A549 (cell line): ENCODE measurements at regions of chr12 and their contacts with region 1.

Region 1: DNA sequence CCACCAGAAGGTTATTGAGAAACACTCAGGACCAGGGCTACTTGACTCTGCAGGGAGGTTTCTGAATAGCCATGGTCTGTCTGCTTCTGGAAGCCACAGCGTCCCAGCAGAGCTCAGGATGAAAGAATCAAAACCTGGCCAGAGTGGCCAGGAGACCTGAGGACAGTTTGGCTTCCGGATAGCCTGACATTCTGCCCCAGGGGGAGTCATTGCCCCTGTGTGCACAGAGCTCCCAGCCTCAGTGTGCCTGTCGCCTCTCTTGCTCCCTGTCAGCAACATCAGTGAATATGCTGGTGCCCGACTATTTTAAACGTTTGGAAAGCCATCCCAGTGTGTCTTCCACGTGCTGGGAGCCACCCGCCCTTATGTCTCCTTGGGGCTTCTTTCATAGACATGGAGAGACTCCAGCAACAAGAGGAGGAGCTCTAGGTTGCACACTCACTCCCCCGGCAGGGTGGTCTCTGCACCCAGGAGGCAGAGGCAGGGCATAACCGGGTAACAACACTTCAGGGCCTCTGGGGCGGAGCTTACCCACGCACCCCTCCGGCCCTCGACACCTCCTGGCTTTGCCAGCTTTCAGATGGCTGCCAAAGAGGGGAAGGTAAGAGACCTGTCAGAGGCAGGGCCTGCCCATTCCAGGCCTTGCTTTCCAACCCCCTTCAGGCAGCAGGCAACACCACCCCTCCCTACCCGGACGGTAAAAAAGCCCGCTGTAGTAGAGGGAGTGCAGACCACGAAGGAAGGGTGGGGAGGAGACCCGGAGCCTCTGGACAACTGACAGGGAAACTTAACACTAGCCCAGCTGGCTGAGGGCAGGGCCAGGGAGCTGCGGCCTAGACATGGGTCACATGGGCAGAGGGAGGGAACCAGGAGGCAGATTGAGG is 19.0 kb upstream of the SLC6A12 start:
- DNase-seq: no peak
- ATAC-seq: no peak
- H3K4me3 ChIP-seq: no peak overlapping the region
- H3K27ac ChIP-seq: no peak overlapping the region
- H3K4me1 ChIP-seq: 0 out of 3 replicates have a peak, but pooled peaks cover 4% of the 10 kb centered on the region
- CTCF ChIP-seq: no peak
- EP300 ChIP-seq: no peak
- POLR2A ChIP-seq: no peak
- RAD21 ChIP-seq: no peak

Region 2: GRCh38 chr12:169528-170370 is 63.2 kb before region 1 on chr12:
- CTCF ChIA-PET with region 1: no interaction called
- POLR2A ChIA-PET with region 1: no interaction called
- DNase-seq: no peak
- ATAC-seq: peak; percentile 57 to 74; a peak in 5 of 6 replicates
- H3K4me3 ChIP-seq: no peak overlapping the region
- H3K27ac ChIP-seq: no peak overlapping the region
- H3K4me1 ChIP-seq: no peaks in the 10 kb centered on the region
- CTCF ChIP-seq: no peak
- EP300 ChIP-seq: no peak
- POLR2A ChIP-seq: no peak
- RAD21 ChIP-seq: no peak

Region 3: DNA sequence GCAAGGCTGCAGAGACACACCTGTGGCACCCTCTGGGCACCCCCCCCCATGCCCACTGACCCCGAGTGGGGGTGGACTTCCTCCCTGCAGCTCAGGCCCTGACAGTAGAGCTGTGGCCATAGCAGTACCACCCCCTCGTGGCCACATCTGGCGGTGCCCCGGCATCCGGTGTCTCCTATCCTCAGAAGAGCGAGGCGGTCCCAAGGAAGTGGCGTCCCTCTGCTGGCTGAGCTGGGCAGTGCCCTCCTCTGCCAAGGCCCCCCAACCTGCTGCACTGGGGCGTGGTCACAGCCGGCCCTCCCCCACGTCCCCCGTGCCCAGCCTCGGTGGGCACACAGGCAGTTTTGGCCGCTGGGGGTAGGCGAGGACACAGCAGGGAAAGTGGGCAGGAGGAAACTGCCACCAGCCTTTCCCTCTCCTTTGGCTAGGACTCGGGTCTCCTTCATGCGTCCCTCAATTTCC is 13.1 kb before region 1 on chr12:
- CTCF ChIA-PET with region 1: interaction called, 19 read pairs
- POLR2A ChIA-PET with region 1: no interaction called
- DNase-seq: peak; percentile 84 to 88
- ATAC-seq: peak; percentile 94 to 99
- H3K4me3 ChIP-seq: no peak overlapping the region
- H3K27ac ChIP-seq: peak overlapping the region in 1 of 2 experiments; percentile 60; a peak in 2 of 6 replicates
- H3K4me1 ChIP-seq: no peaks in the 10 kb centered on the region
- CTCF ChIP-seq: peak; percentile 70
- EP300 ChIP-seq: no peak
- POLR2A ChIP-seq: no peak
- RAD21 ChIP-seq: peak; percentile 76 to 79